ENCODE measurements at regions of chrX and their contacts with region 1.

Region 1: DNA sequence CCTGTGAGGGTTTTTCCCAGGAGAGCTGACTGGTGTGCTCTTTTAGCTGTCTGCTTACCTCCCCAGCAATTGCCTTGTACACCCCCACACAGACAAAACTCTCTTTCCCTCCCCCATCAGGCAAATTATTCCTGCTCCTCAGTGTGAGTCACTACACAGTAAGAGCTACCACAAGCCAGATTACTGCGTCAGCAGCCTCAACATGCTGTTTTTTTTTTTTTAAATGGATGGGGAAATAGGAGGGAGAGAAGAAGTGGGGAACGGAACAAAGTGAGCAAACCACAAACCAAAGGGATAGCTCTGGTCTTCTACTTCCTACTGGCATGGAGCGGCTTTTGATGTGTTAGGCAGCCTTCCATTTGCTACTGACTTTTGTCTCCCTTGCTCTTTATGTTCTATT is 107.5 kb upstream of the ACSL4 start:
- DNase-seq: peak in 1 of 2 donors; percentile 54
- ATAC-seq: peak; percentile 71
- H3K4me3 ChIP-seq: no peak overlapping the region
- H3K27ac ChIP-seq: no peak overlapping the region
- H3K4me1 ChIP-seq: peaks cover 0 to 3% of the 10 kb centered on the region in 2 donors
- H3K27me3 ChIP-seq: no peaks in the 10 kb centered on the region

Region 2: GRCh38 chrX:109782994-109783700 is 57.4 kb before region 1 on chrX:
- intact Hi-C with region 1: loop called in 1 of 2 experiments (anchors 10 kb)
- DNase-seq: no peak
- ATAC-seq: peak; percentile 22
- H3K4me3 ChIP-seq: no peak overlapping the region
- H3K27ac ChIP-seq: peak overlapping the region in 1 of 2 donors; percentile 33
- H3K4me1 ChIP-seq: no peaks in the 10 kb centered on the region
- H3K27me3 ChIP-seq: no peaks in the 10 kb centered on the region